ENCODE measurements at regions of chr18 and their contacts with region 1.

Region 1: DNA sequence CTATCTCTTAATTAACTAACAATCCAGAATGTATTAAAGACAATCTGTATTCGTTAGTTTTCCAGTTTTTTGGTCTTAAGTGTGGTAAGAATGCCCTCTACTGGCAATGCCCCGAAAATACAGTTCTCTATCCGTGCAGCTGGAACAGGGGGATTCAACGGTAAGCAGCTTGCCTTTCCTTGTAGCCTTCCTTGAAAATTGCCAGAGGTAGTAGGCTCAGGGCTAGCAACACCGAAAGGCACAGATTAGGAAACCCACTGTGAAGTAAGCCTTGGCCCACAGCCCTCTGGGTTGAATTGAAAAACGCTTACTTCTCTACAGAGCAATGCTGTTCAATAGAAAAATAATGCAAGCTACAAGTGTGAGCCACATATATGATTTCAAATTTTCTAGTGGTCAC is 17.1 kb upstream of the VPS4B start:
- DNase-seq: peak; percentile 2 to 56 (median 49)
- H3K4me3 ChIP-seq: no peak overlapping the region
- H3K4me3 Mint-ChIP-seq: no peak overlapping the region
- H3K27ac ChIP-seq: no peak overlapping the region
- H3K27ac Mint-ChIP-seq: no peak overlapping the region
- H3K4me1 ChIP-seq: no peaks in the 10 kb centered on the region
- H3K4me1 Mint-ChIP-seq: peaks cover 0 to 3% (median 0%) of the 10 kb centered on the region in 3 donors
- H3K27me3 ChIP-seq: no peaks in the 10 kb centered on the region
- H3K27me3 Mint-ChIP-seq: peaks cover 2 to 15% of the 10 kb centered on the region in 2 donors

Region 2: DNA sequence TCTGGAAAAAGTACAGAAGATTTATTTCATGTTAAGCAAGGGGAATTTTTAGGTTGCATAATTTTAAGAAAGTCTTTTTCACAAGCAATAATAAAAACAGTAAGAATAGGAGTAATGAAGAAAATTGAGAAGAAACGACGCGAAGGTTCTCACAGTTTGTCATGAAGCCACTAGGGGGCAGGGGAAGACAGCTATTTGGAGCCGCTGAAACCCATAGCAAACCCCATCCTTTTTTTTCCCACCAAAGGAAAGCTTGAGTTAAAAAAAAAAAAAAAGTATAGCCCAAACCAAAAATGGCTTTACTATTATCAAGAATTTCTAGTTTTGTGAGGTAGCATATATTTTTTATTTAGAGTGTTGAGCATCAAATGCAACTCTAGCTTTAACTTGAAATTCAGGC is 423.1 kb before region 1 on chr18:
- CTCF ChIA-PET with region 1: interaction called, 42 read pairs
- POLR2A ChIA-PET with region 1: no interaction called
- DNase-seq: peak in 4 of 5 donors; percentile 31 to 63 (median 50)
- H3K4me3 ChIP-seq: no peak overlapping the region
- H3K4me3 Mint-ChIP-seq: no peak overlapping the region
- H3K27ac ChIP-seq: no peak overlapping the region
- H3K27ac Mint-ChIP-seq: peak overlapping the region in 1 of 8 donors; percentile 39
- H3K4me1 ChIP-seq: no peaks in the 10 kb centered on the region
- H3K4me1 Mint-ChIP-seq: no peaks in the 10 kb centered on the region
- H3K27me3 ChIP-seq: peaks cover 4% of the 10 kb centered on the region
- H3K27me3 Mint-ChIP-seq: peaks cover 12 to 26% of the 10 kb centered on the region in 2 donors

Region 3: GRCh38 chr18:63329431-63330145 is 109.7 kb before region 1 on chr18:
- CTCF ChIA-PET with region 1: interaction called, 40 read pairs
- POLR2A ChIA-PET with region 1: no interaction called
- DNase-seq: no peak
- H3K4me3 ChIP-seq: no peak overlapping the region
- H3K4me3 Mint-ChIP-seq: no peak overlapping the region
- H3K27ac ChIP-seq: no peak overlapping the region
- H3K27ac Mint-ChIP-seq: no peak overlapping the region
- H3K4me1 ChIP-seq: no peaks in the 10 kb centered on the region
- H3K4me1 Mint-ChIP-seq: no peaks in the 10 kb centered on the region
- H3K27me3 ChIP-seq: no peaks in the 10 kb centered on the region
- H3K27me3 Mint-ChIP-seq: no peaks in the 10 kb centered on the region

Region 4: GRCh38 chr18:63339920-63340484 is 99.3 kb before region 1 on chr18:
- CTCF ChIA-PET with region 1: interaction called, 59 read pairs
- POLR2A ChIA-PET with region 1: no interaction called
- DNase-seq: peak in 4 of 5 donors; percentile 25 to 54 (median 43)
- H3K4me3 ChIP-seq: no peak overlapping the region
- H3K4me3 Mint-ChIP-seq: no peak overlapping the region
- H3K27ac ChIP-seq: no peak overlapping the region
- H3K27ac Mint-ChIP-seq: peak overlapping the region in 3 of 8 donors; percentile 8 to 76 (median 25)
- H3K4me1 ChIP-seq: no peaks in the 10 kb centered on the region
- H3K4me1 Mint-ChIP-seq: peaks cover 6 to 7% (median 6%) of the 10 kb centered on the region in 3 donors
- H3K27me3 ChIP-seq: no peaks in the 10 kb centered on the region
- H3K27me3 Mint-ChIP-seq: no peaks in the 10 kb centered on the region

Region 5: DNA sequence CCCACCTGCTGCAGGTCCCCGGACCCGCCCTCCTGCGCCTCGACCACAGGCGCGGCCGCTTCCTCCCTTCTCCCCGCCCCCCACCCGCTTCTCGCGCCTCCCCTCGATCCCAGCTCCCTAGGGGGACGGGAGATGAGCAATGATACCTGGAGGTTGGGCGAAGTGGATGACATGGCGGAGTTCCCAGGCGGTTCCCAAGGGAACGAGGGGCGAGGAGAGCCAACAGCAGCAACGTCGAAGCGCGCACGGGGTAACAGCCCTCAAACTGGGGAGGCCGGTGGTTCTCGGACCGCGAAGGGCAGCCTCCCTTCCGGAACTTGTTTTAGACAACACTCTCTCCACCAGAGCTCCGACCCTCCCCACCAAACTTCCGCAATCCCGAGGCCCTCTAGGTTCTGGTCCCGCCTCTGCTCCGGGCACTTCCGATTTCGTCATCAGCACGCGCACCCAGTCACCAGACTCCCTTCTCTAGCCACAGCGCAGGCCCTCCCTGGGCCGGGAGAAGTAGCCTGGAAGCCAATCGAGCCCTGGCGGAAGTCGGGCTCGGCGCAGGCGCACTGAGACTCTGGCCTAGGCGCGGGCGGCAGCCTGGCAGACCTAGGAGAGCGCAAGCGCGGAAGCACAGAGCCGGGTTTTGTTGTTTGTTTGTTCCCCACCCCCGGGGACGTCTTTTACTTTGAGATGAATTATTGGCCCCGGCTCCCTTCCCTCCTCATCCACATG is 17.1 kb before region 1 on chr18 and contains the start of gene VPS4B:
- CTCF ChIA-PET with region 1: interaction called, 20 read pairs
- POLR2A ChIA-PET with region 1: interaction called, 3 read pairs
- DNase-seq: peak; percentile 99 to 100 (median 100)
- H3K4me3 ChIP-seq: peak within 1 kb of the TSS; percentile 97
- H3K4me3 Mint-ChIP-seq: peak within 1 kb of the TSS; percentile 88 to 100 (median 97)
- H3K27ac ChIP-seq: peak within 1 kb of the TSS; percentile 97
- H3K27ac Mint-ChIP-seq: peak within 1 kb of the TSS; percentile 91 to 99 (median 98)
- H3K4me1 ChIP-seq: peaks cover 33% of the 10 kb centered on the region
- H3K4me1 Mint-ChIP-seq: peaks cover 25 to 34% (median 28%) of the 10 kb centered on the region in 3 donors
- H3K27me3 ChIP-seq: no peaks in the 10 kb centered on the region
- H3K27me3 Mint-ChIP-seq: peaks cover 2 to 9% of the 10 kb centered on the region in 2 donors
- total RNA-seq, gene VPS4B: 60.8 to 61.9 TPM

Region 6: GRCh38 chr18:63427558-63427957 is 11.8 kb before region 1 on chr18:
- CTCF ChIA-PET with region 1: interaction called, 20 read pairs
- POLR2A ChIA-PET with region 1: no interaction called
- DNase-seq: no peak
- H3K4me3 ChIP-seq: no peak overlapping the region
- H3K4me3 Mint-ChIP-seq: peak overlapping the region in 1 of 7 donors; percentile 1
- H3K27ac ChIP-seq: no peak overlapping the region
- H3K27ac Mint-ChIP-seq: no peak overlapping the region
- H3K4me1 ChIP-seq: peaks cover 10% of the 10 kb centered on the region
- H3K4me1 Mint-ChIP-seq: peaks cover 11 to 14% (median 12%) of the 10 kb centered on the region in 3 donors
- H3K27me3 ChIP-seq: no peaks in the 10 kb centered on the region
- H3K27me3 Mint-ChIP-seq: peaks cover 9 to 40% of the 10 kb centered on the region in 2 donors

Region 7: GRCh38 chr18:63454497-63454896 is 15.2 kb after region 1 on chr18:
- CTCF ChIA-PET with region 1: no interaction called
- POLR2A ChIA-PET with region 1: no interaction called
- DNase-seq: no peak
- H3K4me3 ChIP-seq: no peak overlapping the region
- H3K4me3 Mint-ChIP-seq: no peak overlapping the region
- H3K27ac ChIP-seq: no peak overlapping the region
- H3K27ac Mint-ChIP-seq: no peak overlapping the region
- H3K4me1 ChIP-seq: no peaks in the 10 kb centered on the region
- H3K4me1 Mint-ChIP-seq: no peaks in the 10 kb centered on the region
- H3K27me3 ChIP-seq: no peaks in the 10 kb centered on the region
- H3K27me3 Mint-ChIP-seq: peaks cover 3 to 12% of the 10 kb centered on the region in 2 donors